Ascending aorta (tissue), 2 donors: ENCODE measurements at regions of chr15 and their contacts with region 1.

Region 1: DNA sequence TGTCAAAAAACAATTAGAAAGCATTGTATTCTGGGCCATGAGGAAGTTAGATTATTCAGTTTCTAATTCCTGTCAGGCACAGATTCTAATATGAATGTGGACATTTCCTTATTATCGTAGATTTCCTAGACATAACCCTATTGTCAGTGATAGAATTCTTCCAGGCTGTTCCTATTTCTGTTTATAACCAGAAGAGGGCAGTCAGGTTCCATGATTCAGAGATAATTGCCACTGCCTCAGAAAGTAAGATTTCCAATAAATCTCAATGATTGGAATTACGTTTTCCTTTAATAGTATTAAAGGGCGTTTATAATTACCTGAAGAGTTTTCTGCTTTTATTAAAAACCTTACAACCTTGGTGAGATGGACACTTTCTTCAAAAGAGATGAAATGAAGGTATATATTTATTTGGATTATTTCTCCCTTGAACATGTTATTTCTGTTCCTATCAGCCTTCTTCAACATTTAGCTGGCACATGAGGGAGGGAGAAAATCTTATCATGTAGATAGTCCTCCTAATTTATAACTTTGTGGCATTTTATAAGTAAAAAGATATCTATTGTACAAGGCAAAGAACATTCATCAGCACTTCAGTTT is 439.2 kb downstream of the MCTP2 start:
- DNase-seq: no peak
- H3K4me3 ChIP-seq: no peak overlapping the region
- H3K27ac ChIP-seq: peak overlapping the region in 1 of 2 donors; percentile 23
- H3K4me1 ChIP-seq: no peaks in the 10 kb centered on the region
- H3K27me3 ChIP-seq: no peaks in the 10 kb centered on the region
- CTCF ChIP-seq: peak; percentile 46 to 74 (median 73)

Region 2: DNA sequence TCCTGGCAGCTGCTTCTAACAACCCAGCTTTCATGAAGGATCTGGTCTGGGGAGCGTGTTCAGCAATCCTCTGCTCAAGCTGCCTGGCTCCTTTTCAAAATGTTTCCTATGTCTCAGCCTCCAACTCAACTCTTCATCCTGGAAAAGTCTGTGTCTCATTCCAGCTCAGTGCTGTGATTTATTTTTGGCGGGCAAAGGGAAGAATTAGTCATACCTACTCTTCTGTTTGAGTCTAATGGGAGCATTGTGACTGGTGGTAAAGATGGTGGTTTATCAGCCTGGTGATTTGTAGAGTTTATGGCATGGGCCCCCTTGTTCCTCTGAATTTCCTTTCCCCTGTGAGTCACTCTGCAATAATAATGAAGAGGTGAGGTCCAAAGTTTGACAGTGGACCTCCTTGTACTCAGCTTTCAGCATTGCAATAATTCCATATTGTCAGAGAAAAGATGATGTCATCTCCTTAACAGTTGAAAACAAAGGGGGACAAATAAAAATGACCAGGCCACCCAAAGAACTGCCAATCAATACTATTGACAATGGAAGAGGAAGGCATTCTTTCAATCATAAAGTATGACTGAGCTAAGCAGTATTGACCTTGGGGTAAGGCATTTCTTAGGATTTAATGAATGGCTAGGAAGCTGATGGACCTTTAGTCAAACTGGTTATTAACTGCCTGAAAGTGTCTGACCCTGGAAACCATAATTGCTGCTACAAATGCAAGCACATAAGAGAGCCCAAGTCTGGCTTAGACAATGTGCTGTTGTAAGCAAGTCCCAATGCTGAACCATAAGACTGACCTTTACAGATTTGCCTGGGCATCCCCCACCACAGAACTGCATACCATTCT is 643.9 kb before region 1 on chr15:
- intact Hi-C with region 1: no loop called
- DNase-seq: no peak
- H3K4me3 ChIP-seq: no peak overlapping the region
- H3K27ac ChIP-seq: no peak overlapping the region
- H3K4me1 ChIP-seq: no peaks in the 10 kb centered on the region
- H3K27me3 ChIP-seq: no peaks in the 10 kb centered on the region
- CTCF ChIP-seq: no peak

Region 3: GRCh38 chr15:94844538-94845389 is 174.2 kb after region 1 on chr15:
- intact Hi-C with region 1: loop called (anchors 2 kb)
- DNase-seq: peak in 1 of 2 donors; percentile 77
- H3K4me3 ChIP-seq: peak overlapping the region; percentile 53 to 69
- H3K27ac ChIP-seq: peak overlapping the region; percentile 88 to 92
- H3K4me1 ChIP-seq: peaks cover 5 to 22% of the 10 kb centered on the region in 2 donors
- H3K27me3 ChIP-seq: no peaks in the 10 kb centered on the region
- CTCF ChIP-seq: peak in 2 of 3 experiments; percentile 15 to 37

Region 4: DNA sequence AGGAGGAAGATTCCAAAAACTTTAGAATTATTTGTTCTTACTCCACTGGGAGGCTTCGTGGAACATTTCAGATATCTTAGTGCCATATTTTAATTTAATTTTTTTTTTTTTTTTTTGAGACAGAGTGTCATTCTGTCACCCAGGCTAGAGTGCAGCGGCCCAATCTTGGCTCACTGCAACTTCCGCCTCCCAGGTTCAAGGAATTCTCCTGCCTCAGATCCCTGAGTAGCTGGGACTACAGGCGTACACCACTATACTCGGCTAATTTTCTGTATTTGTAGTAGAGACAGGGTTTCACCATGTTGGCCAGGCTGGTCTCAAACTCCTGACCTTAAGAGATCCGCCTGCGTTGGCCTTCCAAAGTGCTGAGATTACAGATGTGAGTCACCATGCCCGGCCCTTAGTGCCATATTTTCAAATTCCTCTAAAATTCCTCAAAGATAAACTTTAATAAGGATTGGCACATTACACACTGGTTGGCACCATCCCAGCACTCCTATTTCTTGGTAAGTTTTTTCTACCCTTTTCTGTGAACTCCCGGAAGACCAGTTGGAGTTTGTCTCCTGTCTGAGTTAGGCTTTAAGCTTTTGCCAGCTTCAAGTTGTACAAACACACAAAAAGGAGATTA is 254.5 kb after region 1 on chr15:
- intact Hi-C with region 1: loop called (anchors 10 kb)
- DNase-seq: peak in 1 of 2 donors; percentile 69
- H3K4me3 ChIP-seq: no peak overlapping the region
- H3K27ac ChIP-seq: peak overlapping the region in 1 of 2 donors; percentile 36
- H3K4me1 ChIP-seq: peaks cover 0 to 13% of the 10 kb centered on the region in 2 donors
- H3K27me3 ChIP-seq: no peaks in the 10 kb centered on the region
- CTCF ChIP-seq: no peak

Region 5: DNA sequence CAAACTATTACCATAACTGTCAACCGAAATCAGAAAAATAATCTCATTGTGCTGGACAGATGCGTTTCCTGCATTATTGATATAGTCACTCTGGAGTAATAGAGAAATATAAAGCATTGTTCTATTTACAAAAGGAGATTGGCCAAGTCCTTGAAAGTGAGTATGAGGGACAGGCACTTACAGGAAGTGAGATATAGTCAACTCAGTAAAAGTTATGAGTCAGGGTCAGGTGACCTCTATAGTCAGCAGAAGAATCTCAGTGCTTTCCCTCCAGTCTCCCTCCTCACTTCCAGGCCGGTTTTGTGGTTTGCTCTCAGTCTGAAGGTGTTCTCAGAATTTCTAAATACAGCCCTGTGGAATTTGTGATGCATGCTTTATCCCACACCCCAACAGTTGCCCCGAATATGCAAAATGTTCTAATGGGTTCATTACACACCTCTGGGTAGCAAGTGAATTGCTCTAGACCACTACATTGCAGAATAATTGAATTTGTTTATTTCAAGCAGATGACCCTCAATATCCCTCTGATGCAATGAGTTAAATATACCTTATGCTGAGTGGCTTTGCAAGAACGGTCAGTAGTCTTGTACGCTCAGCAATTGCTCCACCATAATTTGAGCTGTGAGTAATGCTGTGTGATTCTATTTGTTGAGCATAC is 348.5 kb after region 1 on chr15:
- intact Hi-C with region 1: loop called (anchors 10 kb)
- DNase-seq: no peak
- H3K4me3 ChIP-seq: no peak overlapping the region
- H3K27ac ChIP-seq: no peak overlapping the region
- H3K4me1 ChIP-seq: peaks cover 0 to 4% of the 10 kb centered on the region in 2 donors
- H3K27me3 ChIP-seq: no peaks in the 10 kb centered on the region
- CTCF ChIP-seq: no peak

Region 6: DNA sequence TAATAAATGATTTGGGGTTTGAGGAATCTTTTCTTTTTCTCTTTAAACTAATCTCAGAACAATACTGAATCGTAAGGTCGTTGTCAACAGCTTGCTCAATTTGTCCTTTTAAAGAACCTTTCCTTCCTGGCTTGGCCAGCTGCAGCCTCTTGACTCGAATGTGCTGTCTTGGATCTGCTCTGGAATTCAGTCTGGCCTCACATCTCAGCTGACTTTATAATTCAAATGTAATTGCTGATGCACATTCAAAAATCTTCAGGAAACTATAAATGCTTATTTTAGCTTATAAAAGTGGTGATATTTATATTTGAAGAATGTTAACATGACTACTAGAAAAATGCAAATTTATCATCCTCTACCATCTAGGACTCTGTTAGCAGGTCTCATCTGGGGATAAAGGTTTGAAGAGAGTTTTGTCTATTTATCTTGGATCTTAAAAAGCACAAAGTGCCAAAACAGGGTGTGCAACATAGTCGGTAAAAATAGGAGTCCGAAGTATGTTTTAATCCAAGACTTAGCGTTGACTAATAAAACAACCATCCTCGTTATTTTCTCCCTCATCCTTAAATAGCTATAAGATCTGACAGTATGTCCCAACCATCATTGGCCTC is 596.0 kb after region 1 on chr15:
- intact Hi-C with region 1: loop called (anchors 5 kb)
- DNase-seq: peak in 1 of 2 donors; percentile 68
- H3K4me3 ChIP-seq: no peak overlapping the region
- H3K27ac ChIP-seq: peak overlapping the region; percentile 82 to 90
- H3K4me1 ChIP-seq: peaks cover 3 to 42% of the 10 kb centered on the region in 2 donors
- H3K27me3 ChIP-seq: no peaks in the 10 kb centered on the region
- CTCF ChIP-seq: no peak

Region 7: GRCh38 chr15:95291898-95292472 is 621.4 kb after region 1 on chr15:
- intact Hi-C with region 1: no loop called
- DNase-seq: no peak
- H3K4me3 ChIP-seq: no peak overlapping the region
- H3K27ac ChIP-seq: no peak overlapping the region
- H3K4me1 ChIP-seq: peaks cover 0 to 19% of the 10 kb centered on the region in 2 donors
- H3K27me3 ChIP-seq: no peaks in the 10 kb centered on the region
- CTCF ChIP-seq: peak; percentile 19 to 52 (median 37)

Region 8: GRCh38 chr15:95620934-95621579 is 950.5 kb after region 1 on chr15:
- intact Hi-C with region 1: loop called (anchors 10 kb)
- DNase-seq: no peak
- H3K4me3 ChIP-seq: no peak overlapping the region
- H3K27ac ChIP-seq: peak overlapping the region in 1 of 2 donors; percentile 21
- H3K4me1 ChIP-seq: peaks cover 0 to 4% of the 10 kb centered on the region in 2 donors
- H3K27me3 ChIP-seq: no peaks in the 10 kb centered on the region
- CTCF ChIP-seq: no peak

Region 9: GRCh38 chr15:96345560-96346399 is 1675.2 kb after region 1 on chr15:
- intact Hi-C with region 1: loop called (anchors 5 kb)
- DNase-seq: peak in 1 of 2 donors; percentile 84
- H3K4me3 ChIP-seq: peak overlapping the region; percentile 60 to 89
- H3K27ac ChIP-seq: peak overlapping the region; percentile 85 to 91
- H3K4me1 ChIP-seq: peaks cover 0 to 6% of the 10 kb centered on the region in 2 donors
- H3K27me3 ChIP-seq: no peaks in the 10 kb centered on the region
- CTCF ChIP-seq: peak; percentile 63 to 73 (median 71)